ENCODE measurements at regions of chr13 and their contacts with region 1.

Region 1: GRCh38 chr13:31044377-31045285 is 112.2 kb downstream of the TEX26 start:
- DNase-seq: peak; percentile 78
- H3K4me3 Mint-ChIP-seq: peak overlapping the region; percentile 67
- H3K27ac Mint-ChIP-seq: peak overlapping the region; percentile 89
- H3K4me1 Mint-ChIP-seq: peaks cover 14% of the 10 kb centered on the region
- H3K27me3 Mint-ChIP-seq: peaks cover 2% of the 10 kb centered on the region

Region 2: DNA sequence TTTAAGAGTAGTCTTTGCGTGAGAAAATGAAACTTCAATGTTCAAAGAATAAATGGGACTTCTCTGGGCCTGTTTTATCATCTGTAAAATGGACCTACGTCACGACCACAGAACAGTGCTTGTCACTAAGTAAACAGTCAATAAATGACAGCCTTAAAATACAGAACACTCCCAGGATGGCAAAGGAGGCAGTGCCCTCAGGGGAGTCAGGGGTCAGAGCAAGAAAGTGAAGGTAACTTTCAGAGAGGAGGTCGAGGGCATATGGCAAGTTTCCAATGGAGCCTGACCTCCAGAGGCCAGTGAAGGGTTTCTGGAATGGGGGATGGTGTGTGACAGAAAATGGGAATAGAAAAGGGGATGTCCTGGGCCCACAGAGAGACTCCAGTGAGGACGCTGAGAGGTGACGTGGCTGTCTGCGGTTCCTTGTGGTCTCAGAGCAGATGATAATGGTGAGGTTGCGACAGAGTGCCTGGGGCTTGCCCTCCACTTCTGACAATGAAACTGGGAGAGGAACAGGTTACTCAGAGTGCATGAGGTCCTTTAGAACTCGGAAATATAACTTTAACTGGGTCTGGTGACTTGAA is 1286.0 kb before region 1 on chr13:
- intact Hi-C with region 1: loop called (anchors 10 kb)
- DNase-seq: peak; percentile 26
- H3K4me3 Mint-ChIP-seq: peak overlapping the region; percentile 32
- H3K27ac Mint-ChIP-seq: peak overlapping the region; percentile 74
- H3K4me1 Mint-ChIP-seq: peaks cover 22% of the 10 kb centered on the region
- H3K27me3 Mint-ChIP-seq: peaks cover 3% of the 10 kb centered on the region

Region 3: DNA sequence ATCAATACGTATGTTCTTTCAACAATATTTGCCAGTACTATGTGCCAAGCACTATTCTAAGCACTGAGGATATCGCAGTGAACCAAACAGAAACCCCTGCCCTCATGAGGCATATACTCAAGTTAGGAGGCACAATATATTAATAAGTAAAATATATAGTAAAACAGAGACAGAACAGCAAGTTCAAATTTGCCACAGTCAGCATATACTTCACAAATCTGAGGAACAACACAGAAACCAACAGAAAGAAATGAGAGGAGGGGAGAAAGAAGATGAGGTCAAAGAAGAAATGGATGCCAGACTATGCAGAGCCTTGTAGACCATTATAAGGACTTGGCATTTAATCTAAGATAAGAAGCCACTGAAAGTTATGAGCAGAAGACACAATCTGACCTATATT is 797.2 kb before region 1 on chr13:
- intact Hi-C with region 1: no loop called
- DNase-seq: no peak
- H3K4me3 Mint-ChIP-seq: no peak overlapping the region
- H3K27ac Mint-ChIP-seq: no peak overlapping the region
- H3K4me1 Mint-ChIP-seq: no peaks in the 10 kb centered on the region
- H3K27me3 Mint-ChIP-seq: peaks cover 5% of the 10 kb centered on the region

Region 4: GRCh38 chr13:30371649-30372265 is 672.9 kb before region 1 on chr13:
- intact Hi-C with region 1: loop called (anchors 10 kb)
- DNase-seq: peak; percentile 65
- H3K4me3 Mint-ChIP-seq: peak overlapping the region; percentile 68
- H3K27ac Mint-ChIP-seq: peak overlapping the region; percentile 84
- H3K4me1 Mint-ChIP-seq: peaks cover 80% of the 10 kb centered on the region
- H3K27me3 Mint-ChIP-seq: no peaks in the 10 kb centered on the region

Region 5: GRCh38 chr13:30453727-30454126 is 590.9 kb before region 1 on chr13:
- intact Hi-C with region 1: no loop called
- DNase-seq: no peak
- H3K4me3 Mint-ChIP-seq: no peak overlapping the region
- H3K27ac Mint-ChIP-seq: no peak overlapping the region
- H3K4me1 Mint-ChIP-seq: peaks cover 10% of the 10 kb centered on the region
- H3K27me3 Mint-ChIP-seq: peaks cover 3% of the 10 kb centered on the region

Region 6: GRCh38 chr13:30673669-30674521 is 370.7 kb before region 1 on chr13:
- intact Hi-C with region 1: loop called (anchors 2 kb)
- DNase-seq: peak; percentile 80
- H3K4me3 Mint-ChIP-seq: peak overlapping the region; percentile 85
- H3K27ac Mint-ChIP-seq: peak overlapping the region; percentile 84
- H3K4me1 Mint-ChIP-seq: peaks cover 28% of the 10 kb centered on the region
- H3K27me3 Mint-ChIP-seq: peaks cover 22% of the 10 kb centered on the region

Region 7: GRCh38 chr13:30889196-30889690 is 155.4 kb before region 1 on chr13:
- intact Hi-C with region 1: loop called (anchors 5 kb)
- DNase-seq: no peak
- H3K4me3 Mint-ChIP-seq: no peak overlapping the region
- H3K27ac Mint-ChIP-seq: no peak overlapping the region
- H3K4me1 Mint-ChIP-seq: peaks cover 11% of the 10 kb centered on the region
- H3K27me3 Mint-ChIP-seq: peaks cover 16% of the 10 kb centered on the region

Region 8: DNA sequence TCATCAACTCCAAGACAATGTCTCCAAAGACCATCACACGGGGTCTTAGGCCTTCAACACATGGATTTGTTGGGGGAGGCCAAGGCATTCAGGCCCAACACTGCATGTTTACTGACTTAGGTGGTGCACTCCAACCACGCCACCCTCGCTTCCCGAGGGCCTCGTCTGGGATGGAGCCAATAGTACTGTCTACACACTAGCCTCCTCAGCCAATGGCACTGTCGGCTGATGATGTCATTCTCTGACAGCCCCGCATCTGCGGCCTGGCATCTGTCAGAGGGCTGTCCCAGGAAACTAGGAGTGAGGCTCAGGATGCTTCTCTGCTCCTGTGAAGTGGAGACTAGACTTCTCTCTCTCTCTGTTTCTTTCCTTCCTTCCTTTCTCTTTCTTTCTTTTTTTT is 15.5 kb before region 1 on chr13:
- intact Hi-C with region 1: no loop called
- DNase-seq: no peak
- H3K4me3 Mint-ChIP-seq: no peak overlapping the region
- H3K27ac Mint-ChIP-seq: no peak overlapping the region
- H3K4me1 Mint-ChIP-seq: no peaks in the 10 kb centered on the region
- H3K27me3 Mint-ChIP-seq: peaks cover 26% of the 10 kb centered on the region

Region 9: GRCh38 chr13:31073859-31074718 is 29.5 kb after region 1 on chr13:
- intact Hi-C with region 1: loop called (anchors 1 kb)
- DNase-seq: no peak
- H3K4me3 Mint-ChIP-seq: no peak overlapping the region
- H3K27ac Mint-ChIP-seq: no peak overlapping the region
- H3K4me1 Mint-ChIP-seq: peaks cover 12% of the 10 kb centered on the region
- H3K27me3 Mint-ChIP-seq: no peaks in the 10 kb centered on the region

Region 10: DNA sequence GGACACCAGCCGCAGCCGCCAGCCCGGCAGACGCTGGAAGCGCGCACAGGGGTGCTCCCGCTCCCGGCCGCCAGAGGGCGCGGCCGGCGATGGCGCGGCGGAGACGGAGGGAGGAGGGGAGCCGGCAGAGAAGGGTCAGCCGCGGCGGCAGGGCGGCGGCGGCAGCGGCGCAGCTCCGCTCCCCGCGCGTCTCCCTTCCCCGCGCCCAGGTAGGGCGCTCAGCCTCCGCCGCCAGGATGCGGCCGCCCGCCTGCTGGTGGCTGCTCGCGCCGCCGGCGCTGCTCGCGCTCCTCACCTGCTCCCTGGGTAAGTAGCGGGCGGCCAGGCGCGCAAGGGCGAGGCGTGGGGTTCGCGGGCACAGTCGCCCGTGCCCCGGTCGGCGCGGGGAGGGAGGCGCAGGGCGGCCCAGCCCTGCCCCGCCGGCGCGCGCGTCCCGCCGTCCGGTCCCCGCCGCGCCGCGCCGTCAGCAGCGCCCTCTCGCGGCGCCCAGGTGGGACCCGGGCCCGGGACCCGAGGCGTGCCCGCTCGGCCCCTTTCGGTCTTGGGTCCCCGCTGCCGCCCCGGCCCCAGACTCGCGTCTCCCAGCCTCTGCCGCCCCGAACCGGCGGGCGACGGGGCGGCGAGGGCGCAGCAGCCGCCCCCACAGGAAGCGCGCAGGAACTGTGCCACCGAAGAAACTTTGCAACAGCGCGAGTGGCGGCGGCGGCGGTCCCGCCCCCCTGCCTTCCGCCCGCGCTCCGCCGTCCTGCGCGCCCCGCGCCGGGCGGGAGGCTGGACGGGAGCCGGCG is 155.4 kb after region 1 on chr13 and contains the start of gene B3GLCT:
- intact Hi-C with region 1: loop called (anchors 2 kb)
- DNase-seq: peak; percentile 76
- H3K4me3 Mint-ChIP-seq: peak within 1 kb of the TSS; percentile 85
- H3K27ac Mint-ChIP-seq: peak within 1 kb of the TSS; percentile 80
- H3K4me1 Mint-ChIP-seq: peaks cover 32% of the 10 kb centered on the region
- H3K27me3 Mint-ChIP-seq: peaks cover 2% of the 10 kb centered on the region
- total RNA-seq, gene B3GLCT: 4.2 and 4.3 TPM in 2 replicates

Measured in activated T-helper 1 cell treated with anti-CD3 and anti-CD28 coated beads, Interleukin-12 subunit alpha, Interleukin-12 subunit beta, Interleukin-2, Interleukin-4 antibody, amounts not matched to agents 30 ng/mL and 10 ng/mL and 1 ng/mL, durations not matched to agents 14 hours and 24 hours and 36 hours (primary cell).